ENCODE measurements at regions of chr11 and their contacts with region 1.

Region 1: GRCh38 chr11:93741094-93741881 is at the starts of genes C11orf54 and TAF1D:
- DNase-seq: peak; percentile 100
- H3K4me3 ChIP-seq: peak within 1 kb of the TSS; percentile 74
- H3K4me3 Mint-ChIP-seq: peak within 1 kb of the TSS; percentile 89
- H3K27ac Mint-ChIP-seq: peak within 1 kb of the TSS; percentile 98
- H3K4me1 ChIP-seq: peaks cover 52% of the 10 kb centered on the region
- H3K4me1 Mint-ChIP-seq: peaks cover 59% of the 10 kb centered on the region
- H3K27me3 ChIP-seq: no peaks in the 10 kb centered on the region
- H3K27me3 Mint-ChIP-seq: no peaks in the 10 kb centered on the region
- CTCF ChIP-seq: peak in 1 of 2 experiments; percentile 35
- total RNA-seq, gene C11orf54: 20.7 and 21.5 TPM in 2 replicates
- total RNA-seq, gene TAF1D: 354 and 376 TPM in 2 replicates

Region 2: DNA sequence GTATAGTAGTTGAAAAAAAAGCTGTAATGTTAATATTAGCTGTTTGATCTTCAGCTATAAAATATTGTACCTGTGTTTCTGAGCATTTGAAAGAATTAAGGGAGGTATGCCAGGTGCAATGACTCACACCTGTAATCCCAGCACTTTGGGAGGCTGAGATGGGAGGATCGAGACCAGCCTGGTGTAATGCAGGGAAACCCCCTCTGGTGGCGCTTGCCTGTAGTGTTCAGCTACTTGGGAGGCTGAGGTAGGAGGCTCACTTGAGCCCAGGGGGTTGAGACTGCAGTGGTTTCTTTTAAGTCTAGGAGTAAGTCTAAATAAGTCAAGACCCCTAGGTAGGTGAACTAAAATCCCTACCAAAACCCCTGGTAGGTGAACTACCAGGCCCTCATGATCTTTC is 37.1 kb before region 1 on chr11:
- CTCF ChIA-PET with region 1: no interaction called
- POLR2A ChIA-PET with region 1: interaction called, 24 read pairs
- intact Hi-C with region 1: no loop called
- DNase-seq: peak in 1 of 2 experiments; percentile 25
- H3K4me3 ChIP-seq: no peak overlapping the region
- H3K4me3 Mint-ChIP-seq: no peak overlapping the region
- H3K27ac Mint-ChIP-seq: no peak overlapping the region
- H3K4me1 ChIP-seq: no peaks in the 10 kb centered on the region
- H3K4me1 Mint-ChIP-seq: no peaks in the 10 kb centered on the region
- H3K27me3 ChIP-seq: no peaks in the 10 kb centered on the region
- H3K27me3 Mint-ChIP-seq: no peaks in the 10 kb centered on the region
- CTCF ChIP-seq: peak in 1 of 2 experiments; percentile 18

Region 3: DNA sequence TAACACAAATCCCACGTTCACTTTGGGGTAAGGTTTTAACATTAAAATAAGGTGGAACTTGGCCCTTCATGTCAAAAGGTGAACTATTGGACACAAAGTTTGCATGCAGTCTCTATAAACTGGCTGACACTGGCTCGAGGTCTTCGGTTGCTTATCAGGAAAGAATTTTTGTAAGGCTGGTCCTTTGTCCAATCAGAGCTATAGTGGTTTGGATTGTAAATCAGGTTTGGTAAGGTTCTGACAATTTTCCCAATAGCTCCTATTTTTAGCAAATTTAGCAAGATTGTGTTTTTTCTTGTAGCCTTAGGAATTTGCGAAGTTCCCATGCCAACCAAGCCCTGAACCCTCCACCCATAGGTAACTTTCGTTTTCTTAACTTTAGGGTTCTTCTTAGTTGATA is 25.2 kb after region 1 on chr11:
- CTCF ChIA-PET with region 1: no interaction called
- POLR2A ChIA-PET with region 1: interaction called, 8 read pairs
- intact Hi-C with region 1: loop called (anchors 1 kb)
- DNase-seq: no peak
- H3K4me3 ChIP-seq: no peak overlapping the region
- H3K4me3 Mint-ChIP-seq: no peak overlapping the region
- H3K27ac Mint-ChIP-seq: no peak overlapping the region
- H3K4me1 ChIP-seq: peaks cover 30% of the 10 kb centered on the region
- H3K4me1 Mint-ChIP-seq: peaks cover 28% of the 10 kb centered on the region
- H3K27me3 ChIP-seq: no peaks in the 10 kb centered on the region
- H3K27me3 Mint-ChIP-seq: no peaks in the 10 kb centered on the region
- CTCF ChIP-seq: no peak

Region 4: GRCh38 chr11:93849751-93850593 is 108.7 kb after region 1 on chr11:
- CTCF ChIA-PET with region 1: interaction called, 3 read pairs
- POLR2A ChIA-PET with region 1: interaction called, 11 read pairs
- intact Hi-C with region 1: no loop called
- DNase-seq: peak; percentile 55 to 66
- H3K4me3 ChIP-seq: peak overlapping the region; percentile 45
- H3K4me3 Mint-ChIP-seq: peak overlapping the region; percentile 70
- H3K27ac Mint-ChIP-seq: peak overlapping the region; percentile 24
- H3K4me1 ChIP-seq: peaks cover 6% of the 10 kb centered on the region
- H3K4me1 Mint-ChIP-seq: no peaks in the 10 kb centered on the region
- H3K27me3 ChIP-seq: no peaks in the 10 kb centered on the region
- H3K27me3 Mint-ChIP-seq: no peaks in the 10 kb centered on the region
- CTCF ChIP-seq: peak in 1 of 2 experiments; percentile 49

Region 5: DNA sequence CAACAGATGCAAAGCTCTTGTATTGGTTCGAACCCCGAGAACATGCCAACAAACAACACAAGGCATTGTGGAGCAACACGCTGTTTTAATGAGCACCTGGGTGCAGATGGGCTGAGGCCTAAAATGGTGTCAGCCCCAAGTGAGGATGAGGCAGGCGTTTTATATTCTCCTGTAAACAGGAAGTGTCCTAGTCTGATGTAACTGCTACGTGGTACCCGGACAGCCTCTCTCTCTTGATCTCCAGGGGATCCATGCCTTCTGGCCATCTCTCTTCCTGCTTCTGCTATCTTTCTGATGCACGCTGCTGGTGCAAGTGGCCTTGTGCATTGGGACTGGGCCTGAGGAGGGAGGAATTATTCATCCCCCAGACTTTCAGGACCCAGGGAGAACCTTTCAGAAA is 128.5 kb after region 1 on chr11:
- CTCF ChIA-PET with region 1: no interaction called
- POLR2A ChIA-PET with region 1: no interaction called
- intact Hi-C with region 1: no loop called
- DNase-seq: no peak
- H3K4me3 ChIP-seq: no peak overlapping the region
- H3K4me3 Mint-ChIP-seq: no peak overlapping the region
- H3K27ac Mint-ChIP-seq: no peak overlapping the region
- H3K4me1 ChIP-seq: peaks cover 15% of the 10 kb centered on the region
- H3K4me1 Mint-ChIP-seq: peaks cover 6% of the 10 kb centered on the region
- H3K27me3 ChIP-seq: no peaks in the 10 kb centered on the region
- H3K27me3 Mint-ChIP-seq: no peaks in the 10 kb centered on the region
- CTCF ChIP-seq: no peak

Region 6: DNA sequence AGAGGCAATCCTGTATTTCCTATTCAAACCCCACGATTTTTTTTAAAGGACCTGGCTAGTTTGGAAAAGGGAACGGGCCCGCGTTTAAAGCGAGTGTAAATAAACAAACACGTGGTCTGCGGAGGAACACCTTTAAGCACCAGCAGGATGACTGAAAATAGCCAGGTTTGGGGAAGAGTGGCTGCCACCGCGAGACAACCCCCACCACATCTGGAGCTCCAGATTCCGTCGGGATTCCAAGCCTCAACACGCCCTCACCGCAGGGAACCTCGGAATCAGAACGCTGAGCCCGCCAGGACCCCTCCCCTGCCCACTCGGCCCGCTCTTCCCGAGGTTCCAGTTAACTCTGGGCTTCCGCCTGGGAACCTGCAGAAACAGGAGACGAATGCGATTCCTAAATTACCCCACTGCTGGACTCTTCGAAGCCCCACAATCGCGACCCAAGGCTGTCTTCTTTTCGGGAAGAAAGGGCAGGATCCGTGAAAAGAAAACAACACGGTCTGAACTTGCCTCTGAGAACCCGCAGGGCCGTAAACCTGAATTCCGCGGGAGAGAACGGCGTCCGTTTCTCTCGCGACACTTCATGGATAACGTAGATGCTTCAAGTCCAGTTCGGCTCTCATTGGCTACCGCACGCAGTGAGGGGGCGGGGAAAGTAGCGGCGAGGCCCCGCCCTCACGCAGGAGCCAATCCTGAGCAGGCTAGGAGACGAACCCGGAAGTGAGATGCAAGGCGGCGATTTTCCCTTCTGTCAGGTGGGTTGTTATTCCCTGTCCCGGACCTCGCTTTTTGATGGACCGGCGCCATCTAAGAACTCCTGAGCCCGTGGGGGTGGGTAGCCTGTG is 752.2 kb after region 1 on chr11 and contains the starts of genes ANKRD49 and MRE11:
- CTCF ChIA-PET with region 1: no interaction called
- POLR2A ChIA-PET with region 1: no interaction called
- intact Hi-C with region 1: loop called (anchors 2 kb)
- DNase-seq: peak; percentile 100
- H3K4me3 ChIP-seq: peak within 1 kb of the TSS; percentile 59
- H3K4me3 Mint-ChIP-seq: peak within 1 kb of the TSS; percentile 97
- H3K27ac Mint-ChIP-seq: peak within 1 kb of the TSS; percentile 98
- H3K4me1 ChIP-seq: peaks cover 20% of the 10 kb centered on the region
- H3K4me1 Mint-ChIP-seq: peaks cover 14% of the 10 kb centered on the region
- H3K27me3 ChIP-seq: no peaks in the 10 kb centered on the region
- H3K27me3 Mint-ChIP-seq: no peaks in the 10 kb centered on the region
- CTCF ChIP-seq: no peak
- total RNA-seq, gene ANKRD49: 27.5 and 29.2 TPM in 2 replicates
- total RNA-seq, gene MRE11: 64.8 and 80.0 TPM in 2 replicates